MCF 10A (cell line): ENCODE measurements at regions of chr12 and their contacts with region 1.

Region 1: GRCh38 chr12:119649202-119649808 is 18.6 kb upstream of the PRKAB1 start:
- DNase-seq: peak; percentile 44
- H3K4me3 Mint-ChIP-seq: no peak overlapping the region
- H3K27ac Mint-ChIP-seq: no peak overlapping the region
- H3K4me1 Mint-ChIP-seq: no peaks in the 10 kb centered on the region
- H3K27me3 Mint-ChIP-seq: peaks cover 12% of the 10 kb centered on the region
- CTCF ChIP-seq: peak; percentile 76

Region 2: DNA sequence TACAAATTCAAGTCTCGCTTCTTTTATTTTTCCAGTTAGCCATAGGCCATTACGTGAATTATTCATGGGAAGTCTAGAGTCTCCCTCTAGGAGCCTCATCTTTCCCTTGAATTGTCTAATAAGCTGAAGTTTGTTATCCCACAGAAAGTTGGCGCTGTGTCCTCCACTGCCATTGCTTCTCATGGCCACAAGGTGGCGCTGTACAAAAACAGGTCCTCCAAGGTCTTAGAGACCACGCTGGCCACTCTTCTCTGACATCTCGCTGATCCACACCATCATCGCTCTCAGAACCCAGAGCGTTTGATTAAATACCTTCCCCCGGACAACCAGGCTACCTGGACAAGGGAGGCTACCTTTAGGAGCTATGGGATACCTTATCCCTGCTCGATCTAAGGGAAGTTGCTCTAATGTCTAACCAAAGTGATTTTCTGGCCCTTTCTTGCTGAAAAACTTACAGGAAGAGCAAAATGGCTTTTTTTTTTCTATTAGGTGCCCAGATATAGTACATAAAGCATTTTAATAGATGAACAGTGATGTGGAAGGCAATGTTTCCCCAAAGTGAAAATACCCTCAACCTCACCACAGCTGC is 204.8 kb before region 1 on chr12:
- CTCF ChIA-PET with region 1: interaction called, 8 read pairs
- POLR2A ChIA-PET with region 1: no interaction called
- intact Hi-C with region 1: loop called (anchors 5 kb)
- DNase-seq: peak; percentile 57
- H3K4me3 Mint-ChIP-seq: no peak overlapping the region
- H3K27ac Mint-ChIP-seq: no peak overlapping the region
- H3K4me1 Mint-ChIP-seq: no peaks in the 10 kb centered on the region
- H3K27me3 Mint-ChIP-seq: no peaks in the 10 kb centered on the region
- CTCF ChIP-seq: peak; percentile 65

Region 3: GRCh38 chr12:119659289-119659897 is 10.1 kb after region 1 on chr12:
- CTCF ChIA-PET with region 1: interaction called, 12 read pairs
- POLR2A ChIA-PET with region 1: no interaction called
- intact Hi-C with region 1: no loop called
- DNase-seq: peak; percentile 55
- H3K4me3 Mint-ChIP-seq: no peak overlapping the region
- H3K27ac Mint-ChIP-seq: no peak overlapping the region
- H3K4me1 Mint-ChIP-seq: peaks cover 5% of the 10 kb centered on the region
- H3K27me3 Mint-ChIP-seq: no peaks in the 10 kb centered on the region
- CTCF ChIP-seq: peak; percentile 70